Head of caudate nucleus (tissue), 42 donors: ENCODE measurements at regions of chr2 and their contacts with region 1.

Region 1: DNA sequence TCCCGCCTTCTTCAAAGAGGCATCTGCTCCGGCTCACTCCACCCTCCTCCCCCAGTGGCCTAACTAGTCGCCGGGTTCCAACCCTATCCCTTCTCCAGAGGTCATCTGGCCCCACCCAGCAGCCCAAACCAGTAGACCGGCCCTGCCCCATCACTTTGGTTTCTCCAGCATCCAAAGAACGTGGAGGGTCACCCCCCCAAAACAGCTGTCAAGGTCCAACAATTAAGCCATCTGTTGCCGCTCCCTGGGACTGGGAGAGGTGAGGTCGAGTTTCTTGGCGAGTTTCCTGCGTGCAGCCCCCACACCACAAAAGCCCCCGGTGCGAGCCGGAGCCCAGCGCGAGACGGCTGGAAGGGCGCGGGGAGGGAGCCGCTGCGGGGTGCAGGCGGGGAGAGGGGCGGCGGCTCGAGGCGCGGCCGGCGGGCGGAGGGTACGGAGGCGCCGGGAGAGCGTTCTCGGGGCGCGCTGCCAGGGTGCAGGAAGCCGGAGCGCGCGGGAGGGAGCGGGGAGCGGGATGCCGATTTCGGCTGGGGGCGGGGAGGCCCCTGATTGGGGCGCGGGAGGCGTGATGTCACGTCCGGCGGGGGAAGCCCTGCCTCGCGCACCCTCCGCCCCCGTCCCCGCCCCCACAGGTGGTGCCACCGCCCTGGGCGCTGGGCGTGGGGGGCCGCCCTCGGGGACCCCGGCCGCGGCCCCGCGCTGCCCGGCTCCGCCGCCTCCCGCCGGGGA is 571 bp upstream of the GPC1 start:
- DNase-seq: peak; percentile 74 to 97 (median 94)

Region 2: GRCh38 chr2:240149943-240150784 is 284.7 kb before region 1 on chr2:
- intact Hi-C with region 1: loop called (anchors 5 kb)
- DNase-seq: peak; percentile 33 to 79 (median 60)

Region 3: DNA sequence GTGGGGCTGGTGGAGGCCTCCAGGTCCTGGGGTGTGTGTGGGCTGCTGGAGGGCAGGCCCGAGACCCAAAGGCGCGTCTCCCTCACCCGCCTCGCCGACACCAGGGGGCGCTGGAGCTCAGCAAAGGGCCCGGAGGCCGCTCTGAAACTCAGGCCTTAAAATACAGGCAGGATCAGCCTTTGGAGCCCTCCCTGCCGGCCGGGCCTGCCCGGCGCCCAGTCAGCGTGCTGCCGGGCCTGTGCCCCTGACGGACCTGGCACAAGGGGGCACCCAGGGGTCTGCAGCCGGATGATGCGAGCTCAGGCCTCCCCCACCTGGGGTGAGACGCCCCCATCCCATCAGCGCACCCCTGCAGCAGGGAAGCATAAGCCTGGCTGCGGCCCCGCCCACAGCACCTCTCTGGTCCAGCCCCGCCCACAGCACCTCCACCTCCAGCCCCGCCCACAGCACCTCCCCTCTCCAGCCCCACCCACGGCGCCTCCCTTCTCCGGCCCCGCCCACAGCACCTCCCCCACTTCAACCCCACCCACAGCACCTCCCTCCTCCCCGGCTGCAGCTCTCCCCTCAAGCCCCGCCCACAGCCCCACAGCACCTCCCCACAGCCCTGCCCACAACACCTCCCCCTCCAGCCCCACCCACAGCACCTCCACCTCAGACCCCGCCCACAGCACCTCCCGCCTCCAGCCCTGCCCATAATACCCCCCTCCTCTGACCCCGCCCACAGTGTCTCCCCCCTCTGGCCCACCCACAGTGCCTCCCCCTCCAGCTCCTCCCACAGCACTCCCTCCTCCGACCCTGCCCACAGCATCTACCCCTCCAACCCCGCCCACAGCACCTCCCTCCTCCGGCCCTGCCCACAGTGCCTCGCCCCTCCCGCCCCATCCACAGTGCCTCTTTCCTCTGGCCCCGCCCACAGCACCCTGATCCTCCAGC is 201.7 kb before region 1 on chr2:
- intact Hi-C with region 1: loop called (anchors 1 kb)
- DNase-seq: peak; percentile 73 to 94 (median 86)

Region 4: DNA sequence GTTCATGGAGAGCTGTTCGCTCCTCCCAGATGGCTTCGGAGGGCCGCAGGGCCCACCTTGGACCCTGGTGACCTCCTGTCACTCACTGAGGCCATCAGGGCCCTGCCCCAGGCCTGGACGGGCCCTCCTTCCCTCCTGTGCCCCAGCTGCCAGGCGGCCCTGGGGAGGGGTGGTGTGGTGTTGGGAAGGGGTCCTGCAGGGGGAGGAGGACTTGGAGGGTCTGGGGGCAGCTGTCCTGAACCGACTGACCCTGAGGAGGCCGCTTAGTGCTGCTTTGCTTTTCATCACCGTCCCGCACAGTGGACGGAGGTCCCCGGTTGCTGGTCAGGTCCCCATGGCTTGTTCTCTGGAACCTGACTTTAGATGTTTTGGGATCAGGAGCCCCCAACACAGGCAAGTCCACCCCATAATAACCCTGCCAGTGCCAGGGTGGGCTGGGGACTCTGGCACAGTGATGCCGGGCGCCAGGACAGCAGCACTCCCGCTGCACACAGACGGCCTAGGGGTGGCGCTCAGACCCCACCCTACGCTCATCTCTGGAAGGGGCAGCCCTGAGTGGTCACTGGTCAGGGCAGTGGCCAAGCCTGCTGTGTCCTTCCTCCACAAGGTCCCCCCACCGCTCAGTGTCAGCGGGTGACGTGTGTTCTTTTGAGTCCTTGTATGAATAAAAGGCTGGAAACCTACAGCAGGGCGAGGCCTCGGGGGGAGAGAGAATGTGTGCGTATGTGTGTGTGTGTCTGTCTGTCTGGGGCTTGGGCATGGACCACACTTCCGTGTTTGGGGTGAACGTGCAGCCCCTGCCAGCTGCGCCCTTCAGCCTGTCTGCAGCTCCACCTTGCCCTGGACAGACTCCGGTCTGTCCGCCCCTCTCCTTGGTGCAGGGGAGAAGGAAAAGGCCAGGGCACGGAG is 32.8 kb after region 1 on chr2:
- intact Hi-C with region 1: no loop called
- DNase-seq: peak in 26 of 42 donors; percentile 0 to 43 (median 14)

Region 5: GRCh38 chr2:240560480-240561326 is 125.8 kb after region 1 on chr2:
- intact Hi-C with region 1: no loop called
- DNase-seq: peak; percentile 98 to 100 (median 100)